ENCODE measurements at regions of chr12 and their contacts with region 1.

Region 1: GRCh38 chr12:63068857-63069442 is 82.1 kb downstream of the AVPR1A start:
- DNase-seq: no peak
- ATAC-seq: no peak
- H3K4me3 ChIP-seq: no peak overlapping the region
- H3K27ac ChIP-seq: no peak overlapping the region
- H3K4me1 ChIP-seq: no peaks in the 10 kb centered on the region
- H3K27me3 ChIP-seq: no peaks in the 10 kb centered on the region

Region 2: GRCh38 chr12:62603061-62603810 is 465.7 kb before region 1 on chr12:
- intact Hi-C with region 1: no loop called
- DNase-seq: peak; percentile 89 to 95 (median 95)
- ATAC-seq: peak; percentile 94 to 96
- H3K4me3 ChIP-seq: peak overlapping the region; percentile 71
- H3K27ac ChIP-seq: peak overlapping the region; percentile 97
- H3K4me1 ChIP-seq: no peaks in the 10 kb centered on the region
- H3K27me3 ChIP-seq: no peaks in the 10 kb centered on the region

Region 3: GRCh38 chr12:62813031-62813829 is 255.7 kb before region 1 on chr12:
- intact Hi-C with region 1: loop called in 2 of 4 experiments (anchors 10 kb)
- DNase-seq: peak; percentile 74 to 87 (median 75)
- ATAC-seq: peak; percentile 67 to 73
- H3K4me3 ChIP-seq: no peak overlapping the region
- H3K27ac ChIP-seq: no peak overlapping the region
- H3K4me1 ChIP-seq: no peaks in the 10 kb centered on the region
- H3K27me3 ChIP-seq: no peaks in the 10 kb centered on the region

Region 4: GRCh38 chr12:63276537-63277365 is 207.8 kb after region 1 on chr12:
- intact Hi-C with region 1: no loop called
- DNase-seq: peak in 1 of 3 donors; percentile 13
- ATAC-seq: no peak
- H3K4me3 ChIP-seq: no peak overlapping the region
- H3K27ac ChIP-seq: no peak overlapping the region
- H3K4me1 ChIP-seq: no peaks in the 10 kb centered on the region
- H3K27me3 ChIP-seq: no peaks in the 10 kb centered on the region

Measured in right cardiac atrium (tissue), 5 donors.